ENCODE measurements at regions of chr11 and their contacts with region 1.

Region 1: GRCh38 chr11:61792310-61793085 is at the starts of genes FEN1 and TMEM258:
- DNase-seq: peak; percentile 94
- ATAC-seq: peak; percentile 88
- H3K4me3 Mint-ChIP-seq: peak within 1 kb of the TSS; percentile 92
- H3K27ac Mint-ChIP-seq: peak within 1 kb of the TSS; percentile 98
- H3K4me1 Mint-ChIP-seq: peaks cover 44% of the 10 kb centered on the region
- H3K27me3 Mint-ChIP-seq: no peaks in the 10 kb centered on the region
- total RNA-seq, gene FEN1: 70.0 to 108 TPM
- total RNA-seq, gene TMEM258: 172 to 176 TPM

Region 2: DNA sequence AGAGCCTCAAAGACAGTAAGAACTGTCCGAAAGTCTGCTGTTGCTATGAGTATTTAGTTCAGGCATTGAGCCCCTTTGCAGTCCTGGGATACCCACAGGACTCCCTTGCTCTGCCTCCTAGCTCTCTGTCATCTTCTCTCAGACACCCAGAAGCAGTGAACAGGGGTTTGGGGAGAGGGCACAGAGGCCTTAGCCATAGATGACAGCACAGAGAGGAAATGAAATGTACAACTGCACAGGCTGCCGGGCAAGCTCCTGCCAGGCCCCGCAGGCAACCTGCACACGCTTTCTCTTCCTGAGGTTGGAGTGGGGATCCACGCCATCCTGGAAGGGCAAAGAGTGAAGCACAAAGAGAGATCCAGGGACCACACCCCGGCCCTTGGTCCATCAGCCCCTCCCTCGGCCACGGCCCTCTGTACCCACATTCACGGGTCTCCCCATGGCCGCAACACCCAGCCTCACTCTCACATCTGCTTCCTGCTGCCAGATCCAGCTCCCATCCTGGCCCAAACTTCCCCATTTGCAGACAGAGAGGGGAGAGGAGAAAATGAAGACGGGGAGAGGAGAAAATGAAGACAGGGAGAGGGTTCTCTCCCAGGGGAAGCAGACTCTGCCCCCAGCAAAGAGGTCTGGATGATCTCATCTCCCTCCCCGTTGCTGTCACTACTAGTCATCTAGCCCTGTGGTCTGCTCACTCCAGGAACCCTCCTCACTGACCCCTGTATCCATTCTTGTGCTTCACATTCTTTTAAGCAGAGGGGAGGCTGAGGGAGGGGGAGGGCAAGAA is 780.4 kb before region 1 on chr11:
- CTCF ChIA-PET with region 1: no interaction called
- POLR2A ChIA-PET with region 1: no interaction called
- intact Hi-C with region 1: no loop called
- DNase-seq: no peak
- ATAC-seq: no peak
- H3K4me3 Mint-ChIP-seq: no peak overlapping the region
- H3K27ac Mint-ChIP-seq: peak overlapping the region; percentile 79
- H3K4me1 Mint-ChIP-seq: peaks cover 61% of the 10 kb centered on the region
- H3K27me3 Mint-ChIP-seq: no peaks in the 10 kb centered on the region

Region 3: DNA sequence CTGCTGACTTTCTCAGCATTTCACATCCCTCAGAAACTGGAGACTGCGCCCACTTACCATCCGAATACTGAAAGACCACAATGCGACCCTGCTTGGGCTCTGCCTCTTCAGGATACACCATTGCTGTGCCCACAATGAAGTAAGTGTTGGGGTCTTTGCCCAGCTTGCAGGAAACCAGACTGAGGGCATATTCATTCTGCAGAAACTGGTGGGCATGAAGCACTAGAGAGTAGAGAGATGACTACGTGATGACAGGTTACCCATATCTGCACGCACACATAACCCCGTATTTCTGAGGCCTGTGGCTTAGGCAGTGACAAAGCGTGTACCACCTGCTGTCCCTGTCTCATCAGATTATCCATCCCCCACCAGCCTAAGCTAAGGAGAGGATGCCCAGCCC is 482.8 kb before region 1 on chr11:
- CTCF ChIA-PET with region 1: no interaction called
- POLR2A ChIA-PET with region 1: no interaction called
- intact Hi-C with region 1: no loop called
- DNase-seq: no peak
- ATAC-seq: peak; percentile 61
- H3K4me3 Mint-ChIP-seq: no peak overlapping the region
- H3K27ac Mint-ChIP-seq: no peak overlapping the region
- H3K4me1 Mint-ChIP-seq: no peaks in the 10 kb centered on the region
- H3K27me3 Mint-ChIP-seq: no peaks in the 10 kb centered on the region

Region 4: DNA sequence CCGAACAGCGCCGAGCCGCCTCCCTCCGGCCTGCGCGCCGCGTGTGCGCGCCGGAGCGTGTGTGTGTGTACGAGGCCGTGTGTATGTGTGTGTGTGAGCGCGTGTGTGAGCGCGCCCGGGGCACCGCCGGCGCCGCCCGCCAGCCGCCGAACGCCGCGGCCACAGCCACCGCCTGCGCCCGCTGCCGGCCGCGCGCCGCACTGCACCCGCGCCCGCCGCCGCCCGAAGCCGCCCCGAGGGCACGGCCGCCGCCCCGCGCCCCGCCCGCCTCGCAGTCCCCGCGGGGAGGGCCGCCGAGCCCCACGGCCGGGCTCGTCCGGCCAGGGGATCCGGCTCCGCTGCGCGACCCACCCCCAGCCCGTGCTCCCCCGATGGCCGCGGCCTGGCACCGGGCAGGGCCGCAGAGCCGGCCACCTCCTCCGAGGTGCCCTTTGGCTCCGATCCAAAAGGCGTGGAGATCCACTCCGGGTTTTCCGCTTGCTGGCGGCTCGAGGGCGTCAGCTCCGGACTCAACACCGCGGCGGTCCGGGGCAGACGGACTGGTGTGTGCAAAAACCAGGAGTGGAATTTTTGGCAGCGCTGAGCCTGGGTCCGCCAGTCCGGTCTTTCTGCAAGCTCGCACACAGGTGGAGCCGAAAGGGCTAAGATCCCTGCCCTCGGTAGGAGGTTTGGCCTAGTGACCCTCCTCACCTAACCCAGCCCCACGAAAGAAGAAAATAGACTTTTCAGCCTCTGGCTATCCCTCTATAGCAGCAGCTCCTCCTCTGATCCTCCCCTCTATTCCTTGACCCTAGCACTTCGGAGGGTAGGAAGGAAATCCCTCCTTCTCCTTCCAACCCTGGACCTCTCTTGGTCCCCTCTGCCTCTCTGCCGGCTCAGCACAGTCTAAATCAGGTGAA is 211.2 kb before region 1 on chr11 and contains the start of gene SYT7:
- CTCF ChIA-PET with region 1: no interaction called
- POLR2A ChIA-PET with region 1: no interaction called
- intact Hi-C with region 1: loop called in 1 of 2 experiments (anchors 1 kb)
- DNase-seq: peak; percentile 97
- ATAC-seq: peak; percentile 91
- H3K4me3 Mint-ChIP-seq: peak within 1 kb of the TSS; percentile 64
- H3K27ac Mint-ChIP-seq: no peak within 1 kb of the TSS
- H3K4me1 Mint-ChIP-seq: peaks cover 12% of the 10 kb centered on the region
- H3K27me3 Mint-ChIP-seq: peaks cover 35% of the 10 kb centered on the region
- total RNA-seq, gene SYT7: 0.04 TPM in 1 of 2 experiments, not detected in the other

Region 5: GRCh38 chr11:61776551-61777075 is 15.9 kb before region 1 on chr11:
- CTCF ChIA-PET with region 1: interaction called, 14 read pairs
- POLR2A ChIA-PET with region 1: interaction called, 3 read pairs
- intact Hi-C with region 1: loop called in 1 of 2 experiments (anchors 1 kb)
- DNase-seq: peak; percentile 86
- ATAC-seq: peak; percentile 80
- H3K4me3 Mint-ChIP-seq: peak overlapping the region; percentile 23
- H3K27ac Mint-ChIP-seq: no peak overlapping the region
- H3K4me1 Mint-ChIP-seq: peaks cover 11% of the 10 kb centered on the region
- H3K27me3 Mint-ChIP-seq: peaks cover 5% of the 10 kb centered on the region

Region 6: GRCh38 chr11:61827571-61828378 is 35.3 kb after region 1 on chr11 and contains the start of gene FADS2:
- CTCF ChIA-PET with region 1: interaction called, 8 read pairs
- POLR2A ChIA-PET with region 1: no interaction called
- intact Hi-C with region 1: loop called in 1 of 2 experiments (anchors 1 kb)
- DNase-seq: peak; percentile 90
- ATAC-seq: peak; percentile 86
- H3K4me3 Mint-ChIP-seq: peak within 1 kb of the TSS; percentile 84
- H3K27ac Mint-ChIP-seq: peak within 1 kb of the TSS; percentile 74
- H3K4me1 Mint-ChIP-seq: peaks cover 12% of the 10 kb centered on the region
- H3K27me3 Mint-ChIP-seq: peaks cover 40% of the 10 kb centered on the region
- total RNA-seq, gene FADS2: 51.0 to 58.4 TPM

Region 7: GRCh38 chr11:61899146-61899841 is 106.8 kb after region 1 on chr11:
- CTCF ChIA-PET with region 1: interaction called, 34 read pairs
- POLR2A ChIA-PET with region 1: interaction called, 3 read pairs
- intact Hi-C with region 1: loop called (anchors 1 to 5 kb)
- DNase-seq: peak; percentile 95
- ATAC-seq: peak; percentile 94
- H3K4me3 Mint-ChIP-seq: peak overlapping the region; percentile 30
- H3K27ac Mint-ChIP-seq: peak overlapping the region; percentile 55
- H3K4me1 Mint-ChIP-seq: peaks cover 3% of the 10 kb centered on the region
- H3K27me3 Mint-ChIP-seq: no peaks in the 10 kb centered on the region

Region 8: GRCh38 chr11:62081378-62082291 is 289.1 kb after region 1 on chr11:
- CTCF ChIA-PET with region 1: interaction called, 21 read pairs
- POLR2A ChIA-PET with region 1: no interaction called
- intact Hi-C with region 1: loop called in 1 of 2 experiments (anchors 1 kb)
- DNase-seq: peak; percentile 90
- ATAC-seq: peak; percentile 92
- H3K4me3 Mint-ChIP-seq: no peak overlapping the region
- H3K27ac Mint-ChIP-seq: no peak overlapping the region
- H3K4me1 Mint-ChIP-seq: peaks cover 8% of the 10 kb centered on the region
- H3K27me3 Mint-ChIP-seq: no peaks in the 10 kb centered on the region

Region 9: GRCh38 chr11:62179995-62180394 is 387.5 kb after region 1 on chr11:
- CTCF ChIA-PET with region 1: no interaction called
- POLR2A ChIA-PET with region 1: no interaction called
- intact Hi-C with region 1: no loop called
- DNase-seq: no peak
- ATAC-seq: no peak
- H3K4me3 Mint-ChIP-seq: no peak overlapping the region
- H3K27ac Mint-ChIP-seq: no peak overlapping the region
- H3K4me1 Mint-ChIP-seq: no peaks in the 10 kb centered on the region
- H3K27me3 Mint-ChIP-seq: peaks cover 18% of the 10 kb centered on the region

Region 10: GRCh38 chr11:62621567-62622470 is 829.3 kb after region 1 on chr11 and contains the start of gene B3GAT3:
- CTCF ChIA-PET with region 1: no interaction called
- POLR2A ChIA-PET with region 1: no interaction called
- intact Hi-C with region 1: loop called in 1 of 2 experiments (anchors 1 kb)
- DNase-seq: peak; percentile 97
- ATAC-seq: peak; percentile 94
- H3K4me3 Mint-ChIP-seq: peak within 1 kb of the TSS; percentile 92
- H3K27ac Mint-ChIP-seq: peak within 1 kb of the TSS; percentile 94
- H3K4me1 Mint-ChIP-seq: peaks cover 29% of the 10 kb centered on the region
- H3K27me3 Mint-ChIP-seq: no peaks in the 10 kb centered on the region
- total RNA-seq, gene B3GAT3: 48.7 to 57.5 TPM

Region 11: GRCh38 chr11:62787005-62787759 is 994.7 kb after region 1 on chr11 and contains the start of gene TMEM179B:
- CTCF ChIA-PET with region 1: no interaction called
- POLR2A ChIA-PET with region 1: no interaction called
- intact Hi-C with region 1: no loop called
- DNase-seq: peak; percentile 99
- ATAC-seq: peak; percentile 63
- H3K4me3 Mint-ChIP-seq: peak within 1 kb of the TSS; percentile 90
- H3K27ac Mint-ChIP-seq: peak within 1 kb of the TSS; percentile 95
- H3K4me1 Mint-ChIP-seq: peaks cover 42% of the 10 kb centered on the region
- H3K27me3 Mint-ChIP-seq: no peaks in the 10 kb centered on the region
- total RNA-seq, gene TMEM179B: 19.5 to 35.9 TPM